Left ventricle myocardium inferior (tissue), 1 donor: ENCODE measurements at regions of chr9 and their contacts with region 1.

Region 1: GRCh38 chr9:99140685-99141314 is 35.9 kb downstream of the TGFBR1 start:
- DNase-seq: no peak
- H3K4me3 ChIP-seq: no peak overlapping the region
- H3K27ac ChIP-seq: no peak overlapping the region
- H3K4me1 ChIP-seq: peaks cover 30% of the 10 kb centered on the region
- H3K27me3 ChIP-seq: no peaks in the 10 kb centered on the region
- CTCF ChIP-seq: peak; percentile 97

Region 2: DNA sequence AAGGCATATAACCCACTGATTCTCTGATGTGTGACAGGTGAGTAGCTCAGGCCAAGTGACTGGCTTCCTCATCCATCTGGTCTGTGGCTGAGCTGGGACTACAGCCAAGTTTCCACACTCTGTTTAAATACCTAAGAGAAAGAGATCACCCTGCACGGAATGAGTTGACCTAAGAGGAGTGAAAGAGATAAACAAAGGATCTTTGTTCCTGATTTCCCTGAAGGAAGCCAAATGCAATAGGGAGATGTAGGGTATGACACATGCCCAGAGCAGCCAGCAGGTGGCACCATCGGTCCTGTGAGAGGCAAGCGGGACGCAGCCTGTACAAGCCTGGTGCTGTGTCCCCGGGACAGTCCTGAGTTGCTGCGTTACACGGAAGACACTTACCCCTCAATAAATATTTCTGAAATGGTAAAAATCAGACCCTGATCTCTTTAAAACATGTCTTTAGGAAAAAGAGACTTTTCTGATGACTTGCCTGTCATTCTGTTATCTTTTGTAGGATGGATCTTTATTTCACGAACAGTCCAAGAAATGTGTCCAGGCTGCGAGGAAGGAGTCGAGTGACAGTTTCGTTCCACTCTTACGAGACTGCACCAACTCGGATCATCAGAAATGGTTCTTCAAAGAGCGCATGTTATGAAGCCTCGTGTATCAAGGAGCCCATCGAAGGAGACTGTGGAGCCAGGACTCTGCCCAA is 292.2 kb before region 1 on chr9:
- intact Hi-C with region 1: loop called (anchors 2 kb)
- DNase-seq: peak; percentile 91
- H3K4me3 ChIP-seq: peak overlapping the region; percentile 61
- H3K27ac ChIP-seq: peak overlapping the region; percentile 50
- H3K4me1 ChIP-seq: peaks cover 7% of the 10 kb centered on the region
- H3K27me3 ChIP-seq: peaks cover 8% of the 10 kb centered on the region
- CTCF ChIP-seq: peak; percentile 98